Endothelial cell of umbilical vein (primary cell): ENCODE measurements at regions of chr2 and their contacts with region 1.

Region 1: DNA sequence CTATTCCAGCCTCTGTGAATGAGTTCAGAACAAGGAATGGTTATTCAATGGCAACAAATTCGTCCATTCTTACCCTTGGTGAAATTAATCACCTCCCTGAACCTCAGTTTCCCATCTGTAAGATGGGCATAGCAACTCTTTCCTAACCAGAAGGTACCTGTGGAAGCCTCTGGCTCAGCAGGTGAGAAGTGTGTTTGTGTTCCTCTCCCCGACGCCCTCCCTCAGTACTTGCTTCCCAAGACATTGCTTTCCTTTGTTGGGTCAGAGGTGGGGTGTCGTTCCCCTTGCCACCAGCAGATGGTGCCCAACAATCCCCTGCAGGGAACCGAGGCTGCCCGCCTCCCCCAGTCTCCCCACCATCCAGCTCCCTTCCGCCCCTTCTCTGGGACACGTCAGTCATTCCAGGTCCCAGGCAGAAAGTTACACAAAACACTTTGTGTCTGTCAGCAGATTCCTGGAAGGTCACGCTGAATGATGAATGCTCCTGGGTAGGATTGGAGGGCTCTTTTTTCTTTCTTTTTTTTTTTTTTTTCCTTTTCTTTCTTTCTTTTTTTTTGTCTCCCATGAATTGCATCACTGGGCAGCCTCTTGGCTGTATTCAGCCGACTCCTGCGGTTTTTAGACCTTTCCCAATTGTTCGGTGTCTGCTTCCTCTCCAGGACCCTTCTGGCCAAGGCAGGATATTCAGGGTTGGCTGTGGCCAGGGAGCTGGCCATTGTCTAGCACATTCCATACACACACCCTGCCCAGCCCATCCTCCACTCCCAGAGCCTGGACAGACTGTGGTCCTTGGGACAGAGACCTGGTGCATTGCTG is 117.3 kb downstream of the LPIN1 start:
- DNase-seq: peak; percentile 88
- H3K4me3 ChIP-seq: no peak overlapping the region
- H3K27ac ChIP-seq: no peak overlapping the region
- H3K4me1 ChIP-seq: peaks cover 7% of the 10 kb centered on the region
- H3K27me3 ChIP-seq: peaks cover 3 to 11% of the 10 kb centered on the region in 2 experiments
- CTCF ChIP-seq: peak; percentile 80 to 93
- POLR2A ChIP-seq: no peak

Region 2: DNA sequence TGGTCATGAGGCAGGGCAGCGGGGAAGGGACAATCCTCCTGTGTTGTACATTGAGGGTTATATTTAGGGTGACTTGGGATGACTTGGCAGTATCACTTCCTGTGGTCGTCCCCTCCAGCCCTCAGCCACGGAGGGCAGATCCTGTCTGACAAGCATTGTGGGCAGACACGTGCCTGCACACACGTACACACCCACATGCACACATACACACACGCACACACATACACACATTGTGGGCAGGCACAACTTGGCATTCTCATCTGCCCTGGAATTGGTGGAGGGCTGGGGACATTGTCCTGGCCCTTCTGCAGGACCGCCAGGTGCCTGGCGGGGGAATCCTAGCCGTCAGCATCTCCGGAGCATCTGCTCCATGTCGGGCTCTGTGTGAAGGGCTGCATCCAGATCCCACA is 1463.1 kb before region 1 on chr2:
- CTCF ChIA-PET with region 1: no interaction called
- POLR2A ChIA-PET with region 1: no interaction called
- dilution Hi-C with region 1: no loop called
- intact Hi-C with region 1: no loop called
- DNase-seq: no peak
- H3K4me3 ChIP-seq: no peak overlapping the region
- H3K27ac ChIP-seq: peak overlapping the region; percentile 72
- H3K4me1 ChIP-seq: peaks cover 52% of the 10 kb centered on the region
- H3K27me3 ChIP-seq: no peaks in the 10 kb centered on the region
- CTCF ChIP-seq: no peak
- POLR2A ChIP-seq: no peak

Region 3: GRCh38 chr2:11631462-11631861 is 232.3 kb before region 1 on chr2:
- CTCF ChIA-PET with region 1: no interaction called
- POLR2A ChIA-PET with region 1: no interaction called
- dilution Hi-C with region 1: no loop called
- intact Hi-C with region 1: no loop called
- DNase-seq: no peak
- H3K4me3 ChIP-seq: no peak overlapping the region
- H3K27ac ChIP-seq: no peak overlapping the region
- H3K4me1 ChIP-seq: no peaks in the 10 kb centered on the region
- H3K27me3 ChIP-seq: no peaks in the 10 kb centered on the region
- CTCF ChIP-seq: no peak
- POLR2A ChIP-seq: no peak

Region 4: GRCh38 chr2:11753886-11754699 is 109.6 kb before region 1 on chr2:
- CTCF ChIA-PET with region 1: no interaction called
- POLR2A ChIA-PET with region 1: no interaction called
- dilution Hi-C with region 1: no loop called
- intact Hi-C with region 1: no loop called
- DNase-seq: peak; percentile 86
- H3K4me3 ChIP-seq: peak overlapping the region in 1 of 3 experiments; percentile 41
- H3K27ac ChIP-seq: peak overlapping the region; percentile 78
- H3K4me1 ChIP-seq: peaks cover 30% of the 10 kb centered on the region
- H3K27me3 ChIP-seq: no peaks in the 10 kb centered on the region
- CTCF ChIP-seq: no peak
- POLR2A ChIP-seq: no peak

Region 5: DNA sequence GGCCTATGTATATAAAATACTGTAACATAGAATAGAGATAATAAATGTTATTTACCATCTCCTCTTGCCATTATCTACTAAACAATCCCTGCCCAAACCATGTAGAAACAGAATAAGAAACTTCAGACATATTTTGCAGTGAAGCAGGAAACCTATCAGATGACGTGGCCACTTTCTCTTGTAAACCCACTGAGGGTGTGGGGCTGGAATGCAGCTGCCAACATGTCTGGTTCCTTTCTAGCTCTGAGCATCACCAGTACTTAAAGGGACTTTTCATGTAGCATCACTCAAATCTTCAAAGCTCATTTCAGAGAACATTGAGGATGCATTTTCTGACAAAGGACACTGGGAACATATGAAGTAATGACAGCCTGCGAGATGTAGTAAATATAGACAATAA is 134.5 kb after region 1 on chr2:
- CTCF ChIA-PET with region 1: no interaction called
- POLR2A ChIA-PET with region 1: no interaction called
- dilution Hi-C with region 1: no loop called
- intact Hi-C with region 1: loop called (anchors 5 kb)
- DNase-seq: peak; percentile 43
- H3K4me3 ChIP-seq: no peak overlapping the region
- H3K27ac ChIP-seq: no peak overlapping the region
- H3K4me1 ChIP-seq: peaks cover 12% of the 10 kb centered on the region
- H3K27me3 ChIP-seq: no peaks in the 10 kb centered on the region
- CTCF ChIP-seq: no peak
- POLR2A ChIP-seq: no peak

Region 6: DNA sequence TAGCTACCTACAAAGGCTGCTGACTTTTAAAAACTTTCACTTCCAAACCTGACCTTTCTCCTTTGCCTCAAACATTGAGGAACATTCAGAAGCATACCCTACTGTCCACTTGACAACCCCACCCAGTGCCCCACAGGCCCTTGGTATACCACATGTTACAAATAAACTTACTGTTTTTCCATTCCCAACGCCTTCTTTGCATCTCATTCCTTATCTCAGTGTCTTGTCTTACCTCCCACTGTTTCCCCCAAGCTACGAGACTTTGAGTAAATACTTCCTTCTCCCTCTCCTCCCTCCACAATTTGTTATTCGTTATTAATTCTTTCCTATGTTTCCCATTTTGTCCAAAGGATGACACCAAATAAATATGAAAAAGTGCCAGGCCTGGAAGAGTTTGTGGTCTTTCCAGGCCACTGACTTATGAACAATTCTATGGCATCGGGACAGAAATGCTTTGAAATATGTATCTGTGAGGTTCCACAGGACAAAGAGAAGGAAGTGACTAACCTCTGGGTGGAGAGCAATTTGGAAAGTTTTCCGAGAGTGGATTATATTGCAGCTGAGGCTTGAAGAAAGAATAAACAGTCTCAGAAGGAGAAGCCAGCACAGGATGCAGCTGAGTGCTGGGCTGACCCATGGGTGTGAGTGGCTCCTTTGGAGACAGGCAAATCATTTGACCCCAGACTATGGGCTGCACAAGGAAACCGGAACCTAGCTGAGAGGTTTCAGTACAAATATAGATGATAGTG is 291.8 kb after region 1 on chr2:
- CTCF ChIA-PET with region 1: interaction called, 5 read pairs
- POLR2A ChIA-PET with region 1: no interaction called
- dilution Hi-C with region 1: no loop called
- intact Hi-C with region 1: loop called (anchors 5 kb)
- DNase-seq: peak; percentile 97
- H3K4me3 ChIP-seq: no peak overlapping the region
- H3K27ac ChIP-seq: peak overlapping the region; percentile 85
- H3K4me1 ChIP-seq: peaks cover 21% of the 10 kb centered on the region
- H3K27me3 ChIP-seq: peaks cover 0 to 2% of the 10 kb centered on the region in 2 experiments
- CTCF ChIP-seq: no peak
- POLR2A ChIP-seq: peak; percentile 36

Region 7: GRCh38 chr2:12282780-12283695 is 419.3 kb after region 1 on chr2:
- CTCF ChIA-PET with region 1: no interaction called
- POLR2A ChIA-PET with region 1: no interaction called
- dilution Hi-C with region 1: no loop called
- intact Hi-C with region 1: loop called (anchors 10 kb)
- DNase-seq: no peak
- H3K4me3 ChIP-seq: no peak overlapping the region
- H3K27ac ChIP-seq: no peak overlapping the region
- H3K4me1 ChIP-seq: peaks cover 15% of the 10 kb centered on the region
- H3K27me3 ChIP-seq: no peaks in the 10 kb centered on the region
- CTCF ChIP-seq: no peak
- POLR2A ChIP-seq: no peak

Region 8: DNA sequence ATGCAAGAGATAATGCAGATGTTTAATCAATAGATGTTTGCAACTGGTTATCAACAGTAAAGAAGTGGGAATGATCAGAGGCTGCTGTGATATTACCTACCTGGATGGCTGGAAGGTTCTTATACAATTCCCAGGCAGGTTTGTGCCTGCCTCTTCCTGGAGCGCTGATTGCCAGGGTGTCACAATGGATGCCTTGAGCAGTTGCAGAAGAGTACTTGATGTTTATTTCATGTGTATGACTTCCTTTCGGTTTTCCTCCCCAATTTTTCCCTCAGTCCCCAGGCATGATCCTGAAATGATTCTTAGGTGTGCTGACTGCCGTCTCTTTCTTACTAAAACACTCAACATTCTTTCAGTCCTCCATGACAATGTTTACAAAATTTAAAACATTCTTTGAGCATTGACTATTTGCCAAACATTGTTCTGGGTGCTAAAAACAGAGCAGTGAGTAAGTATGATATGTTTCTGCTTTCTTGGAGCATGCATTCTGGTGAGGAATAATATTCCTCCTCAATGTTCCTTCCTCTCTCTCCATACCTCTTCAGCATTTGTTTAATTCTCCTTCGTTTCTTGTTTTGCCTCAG is 436.4 kb after region 1 on chr2:
- CTCF ChIA-PET with region 1: no interaction called
- POLR2A ChIA-PET with region 1: no interaction called
- dilution Hi-C with region 1: no loop called
- intact Hi-C with region 1: no loop called
- DNase-seq: peak; percentile 44
- H3K4me3 ChIP-seq: no peak overlapping the region
- H3K27ac ChIP-seq: no peak overlapping the region
- H3K4me1 ChIP-seq: no peaks in the 10 kb centered on the region
- H3K27me3 ChIP-seq: peaks cover 1 to 2% of the 10 kb centered on the region in 2 experiments
- CTCF ChIP-seq: no peak
- POLR2A ChIP-seq: no peak

Region 9: DNA sequence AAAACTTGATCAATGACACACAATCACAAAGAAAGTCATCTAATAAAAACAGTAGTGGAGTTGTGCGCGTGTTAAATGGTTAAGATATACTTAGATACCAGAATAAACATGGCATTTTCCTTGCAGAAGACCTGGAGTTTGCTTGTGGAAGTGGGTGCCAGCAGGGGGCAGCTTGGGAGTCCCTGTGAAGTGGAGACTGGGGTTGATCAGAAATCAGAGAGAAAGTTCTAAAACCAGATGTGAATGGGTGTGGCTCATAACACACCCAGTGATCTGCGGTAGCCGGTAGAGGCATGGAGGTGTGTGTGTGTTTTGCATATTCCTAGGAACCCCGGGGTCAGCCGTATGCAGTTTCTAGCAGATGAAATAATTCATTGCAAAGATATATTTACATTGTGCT is 552.9 kb after region 1 on chr2:
- CTCF ChIA-PET with region 1: interaction called, 4 read pairs
- POLR2A ChIA-PET with region 1: no interaction called
- dilution Hi-C with region 1: no loop called
- intact Hi-C with region 1: loop called (anchors 1 kb)
- DNase-seq: peak; percentile 57
- H3K4me3 ChIP-seq: no peak overlapping the region
- H3K27ac ChIP-seq: no peak overlapping the region
- H3K4me1 ChIP-seq: peaks cover 3% of the 10 kb centered on the region
- H3K27me3 ChIP-seq: no peaks in the 10 kb centered on the region
- CTCF ChIP-seq: peak; percentile 47 to 62
- POLR2A ChIP-seq: no peak